ENCODE measurements at regions of chr5 and their contacts with region 1.

Region 1: GRCh38 chr5:41264019-41264418 is 50.7 kb upstream of the C6 start:
- DNase-seq: no peak
- ATAC-seq: no peak
- H3K4me3 ChIP-seq: no peak overlapping the region
- H3K27ac ChIP-seq: no peak overlapping the region
- H3K4me1 ChIP-seq: no peaks in the 10 kb centered on the region
- H3K27me3 ChIP-seq: no peaks in the 10 kb centered on the region
- CTCF ChIP-seq: no peak

Region 2: DNA sequence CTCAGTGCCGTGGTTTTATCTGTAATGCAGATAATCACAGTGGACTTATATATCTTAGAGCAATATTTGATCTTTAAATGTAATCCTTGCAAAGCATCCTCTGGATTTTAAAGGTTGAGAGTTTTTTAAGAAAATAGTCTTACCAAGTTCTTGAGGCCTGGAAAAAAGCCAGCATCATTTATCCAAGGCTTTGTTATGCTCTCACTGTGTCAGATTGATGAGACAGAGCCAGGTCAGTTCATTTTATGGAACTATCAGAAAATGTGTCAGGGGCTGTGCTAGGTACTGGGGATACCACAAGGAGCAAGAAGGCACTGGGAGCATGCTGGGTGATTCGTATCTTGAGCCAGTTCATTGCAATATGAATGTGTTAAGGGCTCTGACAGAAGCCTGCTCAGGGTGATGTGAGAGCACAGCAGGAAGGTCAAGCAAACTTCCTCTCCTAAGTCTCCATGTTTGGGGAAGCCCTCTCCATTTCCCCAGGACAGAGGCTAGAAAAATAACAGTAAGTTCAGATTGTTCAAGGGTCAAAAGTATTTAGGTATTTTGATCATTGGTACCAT is 335.1 kb before region 1 on chr5:
- CTCF ChIA-PET with region 1: no interaction called
- POLR2A ChIA-PET with region 1: no interaction called
- in situ Hi-C with region 1: no loop called
- intact Hi-C with region 1: no loop called
- DNase-seq: no peak
- ATAC-seq: no peak
- H3K4me3 ChIP-seq: no peak overlapping the region
- H3K27ac ChIP-seq: no peak overlapping the region
- H3K4me1 ChIP-seq: no peaks in the 10 kb centered on the region
- H3K27me3 ChIP-seq: no peaks in the 10 kb centered on the region
- CTCF ChIP-seq: no peak

Region 3: DNA sequence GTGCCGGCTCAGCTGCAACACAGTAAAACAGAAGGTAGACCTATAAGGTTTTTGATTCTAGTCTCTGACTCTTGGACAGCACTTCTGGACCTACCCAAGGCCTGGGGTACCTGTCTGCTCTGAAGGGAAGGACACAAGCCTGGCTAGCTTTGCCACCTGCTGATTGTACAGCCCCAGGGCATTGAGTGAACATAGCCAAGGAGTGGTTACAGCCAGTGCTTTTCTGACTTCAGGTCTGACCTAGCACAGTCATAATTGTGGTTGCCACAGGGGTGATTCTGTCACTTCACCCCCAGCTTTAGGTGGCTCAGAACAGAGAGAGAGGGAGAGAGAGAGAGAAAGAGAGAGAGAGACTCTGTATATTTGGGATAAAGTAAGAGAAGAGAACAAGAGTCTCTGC is 128.0 kb after region 1 on chr5:
- CTCF ChIA-PET with region 1: no interaction called
- POLR2A ChIA-PET with region 1: no interaction called
- in situ Hi-C with region 1: no loop called
- intact Hi-C with region 1: no loop called
- DNase-seq: no peak
- ATAC-seq: no peak
- H3K4me3 ChIP-seq: no peak overlapping the region
- H3K27ac ChIP-seq: no peak overlapping the region
- H3K4me1 ChIP-seq: no peaks in the 10 kb centered on the region
- H3K27me3 ChIP-seq: no peaks in the 10 kb centered on the region
- CTCF ChIP-seq: no peak

Region 4: DNA sequence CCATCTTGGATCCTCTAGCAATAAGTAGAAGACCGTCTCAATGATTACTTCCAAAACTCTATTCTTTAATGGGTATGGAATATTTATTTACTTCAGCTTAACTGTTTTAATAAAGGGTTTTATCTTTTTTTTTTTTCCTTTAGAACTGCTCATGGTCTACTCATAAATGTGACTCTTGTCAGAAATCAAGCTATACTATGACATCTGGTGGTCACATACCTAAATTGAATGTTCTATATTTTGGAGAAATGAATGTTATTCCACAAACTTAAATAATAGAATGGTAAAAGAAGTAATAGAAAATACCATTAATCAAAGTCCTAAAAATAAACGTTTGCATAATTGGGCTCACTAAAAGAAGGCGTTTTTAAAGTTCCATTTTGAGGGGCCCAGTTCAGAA is 377.6 kb after region 1 on chr5:
- CTCF ChIA-PET with region 1: no interaction called
- POLR2A ChIA-PET with region 1: no interaction called
- in situ Hi-C with region 1: no loop called
- intact Hi-C with region 1: loop called (anchors 10 kb)
- DNase-seq: no peak
- ATAC-seq: no peak
- H3K4me3 ChIP-seq: no peak overlapping the region
- H3K27ac ChIP-seq: no peak overlapping the region
- H3K4me1 ChIP-seq: no peaks in the 10 kb centered on the region
- H3K27me3 ChIP-seq: no peaks in the 10 kb centered on the region
- CTCF ChIP-seq: no peak